ENCODE measurements at regions of chr3 and their contacts with region 1.

Region 1: GRCh38 chr3:120160050-120160449 is 65.8 kb upstream of the GSK3B start:
- DNase-seq: no peak
- H3K4me3 ChIP-seq: no peak overlapping the region
- H3K27ac ChIP-seq: no peak overlapping the region
- H3K4me1 ChIP-seq: no peaks in the 10 kb centered on the region
- H3K27me3 ChIP-seq: no peaks in the 10 kb centered on the region
- CTCF ChIP-seq: no peak
- EP300 ChIP-seq: no peak
- POLR2A ChIP-seq: no peak
- RAD21 ChIP-seq: no peak

Region 2: GRCh38 chr3:120147072-120147871 is 12.8 kb before region 1 on chr3:
- CTCF ChIA-PET with region 1: interaction called, 19 read pairs
- POLR2A ChIA-PET with region 1: interaction called, 5 read pairs
- DNase-seq: no peak
- H3K4me3 ChIP-seq: no peak overlapping the region
- H3K27ac ChIP-seq: no peak overlapping the region
- H3K4me1 ChIP-seq: peaks cover 0 to 4% (median 2%) of the 10 kb centered on the region in 4 experiments; a peak in 3 of 7 replicates
- H3K27me3 ChIP-seq: no peaks in the 10 kb centered on the region
- CTCF ChIP-seq: peak; percentile 55 to 68 (median 65)
- EP300 ChIP-seq: no peak
- POLR2A ChIP-seq: no peak
- RAD21 ChIP-seq: peak; percentile 81 to 85

Region 3: DNA sequence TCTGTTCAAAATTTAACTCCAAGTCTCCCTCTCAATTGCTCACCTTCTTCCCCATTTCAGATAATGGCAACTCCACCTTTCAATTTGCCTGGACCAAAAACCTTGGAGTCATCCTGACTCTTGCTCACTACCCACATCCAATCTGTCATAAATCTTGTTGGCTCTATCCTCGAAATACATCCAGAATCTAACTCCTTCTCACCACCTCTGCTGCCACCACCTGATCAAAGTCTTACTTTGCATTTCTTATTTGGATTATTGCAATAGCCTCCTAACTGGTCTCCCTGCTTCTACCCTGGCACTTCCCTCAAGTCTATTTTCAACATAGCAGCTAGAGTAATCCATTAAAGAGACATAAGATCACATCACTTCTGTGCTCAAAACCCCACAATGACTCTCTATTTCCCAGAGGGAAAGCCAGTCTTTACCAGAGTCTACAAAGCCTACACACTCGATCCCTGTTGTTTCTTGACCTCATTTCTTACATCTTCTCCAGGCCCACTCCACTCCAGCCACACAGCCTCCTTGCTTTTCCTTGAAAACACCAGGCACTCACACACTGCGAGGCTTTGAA is 38.3 kb after region 1 on chr3:
- CTCF ChIA-PET with region 1: no interaction called
- POLR2A ChIA-PET with region 1: no interaction called
- DNase-seq: no peak
- H3K4me3 ChIP-seq: no peak overlapping the region
- H3K27ac ChIP-seq: no peak overlapping the region
- H3K4me1 ChIP-seq: no peaks in the 10 kb centered on the region
- H3K27me3 ChIP-seq: no peaks in the 10 kb centered on the region
- CTCF ChIP-seq: no peak
- EP300 ChIP-seq: no peak
- POLR2A ChIP-seq: no peak
- RAD21 ChIP-seq: peak; percentile 28 to 47; a peak in 3 of 4 replicates

Region 4: DNA sequence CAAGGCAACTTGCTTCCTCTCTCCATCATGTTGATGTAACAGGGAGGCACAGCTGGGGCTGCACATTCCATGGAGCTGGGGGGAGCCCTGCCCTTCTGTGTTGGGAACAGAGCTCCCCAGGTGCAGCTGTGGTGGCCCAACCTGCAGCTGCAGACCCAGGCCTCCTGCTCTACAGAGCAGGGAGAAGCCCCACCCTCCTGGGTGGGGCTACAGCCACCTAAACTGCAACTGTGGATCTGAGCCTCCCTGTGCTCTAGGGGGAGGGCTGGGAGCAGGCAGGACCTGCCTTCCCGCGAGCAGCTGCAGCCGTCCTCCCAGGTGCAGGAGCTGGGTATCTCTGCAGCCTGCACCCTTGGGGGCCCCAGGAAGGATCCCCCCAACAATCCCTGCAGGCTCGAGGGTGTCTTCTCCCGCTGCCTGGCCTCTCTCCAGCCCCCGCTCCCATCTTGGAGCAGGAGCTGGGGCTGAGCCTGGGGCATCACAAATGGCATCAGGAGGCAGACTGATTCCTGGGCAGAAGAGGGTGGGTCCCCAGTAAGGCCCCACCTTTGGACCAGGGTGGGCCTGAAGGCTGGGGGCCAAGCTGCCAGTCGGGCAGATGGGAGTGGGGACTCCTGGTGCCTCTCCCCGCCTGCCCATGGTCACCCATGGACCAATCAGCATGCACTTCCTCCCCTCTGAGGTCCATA is 181.8 kb after region 1 on chr3:
- CTCF ChIA-PET with region 1: no interaction called
- POLR2A ChIA-PET with region 1: no interaction called
- DNase-seq: peak; percentile 31 to 53
- H3K4me3 ChIP-seq: peak overlapping the region in 1 of 4 experiments; percentile 8; a peak in 1 of 8 replicates
- H3K27ac ChIP-seq: no peak overlapping the region
- H3K4me1 ChIP-seq: peaks cover 0 to 6% (median 4%) of the 10 kb centered on the region in 4 experiments; a peak in 4 of 7 replicates
- H3K27me3 ChIP-seq: no peaks in the 10 kb centered on the region
- CTCF ChIP-seq: no peak
- EP300 ChIP-seq: peak in 1 of 2 experiments; percentile 61; a peak in 1 of 3 replicates
- POLR2A ChIP-seq: no peak
- RAD21 ChIP-seq: peak in 1 of 2 experiments; percentile 6; a peak in 1 of 4 replicates